ENCODE measurements at regions of chr16 and their contacts with region 1.

Region 1: GRCh38 chr16:56608043-56608875 is at the start of gene MT2A:
- DNase-seq: peak; percentile 96
- H3K4me3 ChIP-seq: peak within 1 kb of the TSS; percentile 50 to 93 (median 83)
- H3K27ac ChIP-seq: peak within 1 kb of the TSS; percentile 99
- H3K4me1 ChIP-seq: peaks cover 61% of the 10 kb centered on the region
- H3K27me3 ChIP-seq: no peaks in the 10 kb centered on the region
- CTCF ChIP-seq: no peak
- POLR2A ChIP-seq: peak; percentile 99
- total RNA-seq, gene MT2A: 1,337 and 1,517 TPM in 2 replicates

Region 2: DNA sequence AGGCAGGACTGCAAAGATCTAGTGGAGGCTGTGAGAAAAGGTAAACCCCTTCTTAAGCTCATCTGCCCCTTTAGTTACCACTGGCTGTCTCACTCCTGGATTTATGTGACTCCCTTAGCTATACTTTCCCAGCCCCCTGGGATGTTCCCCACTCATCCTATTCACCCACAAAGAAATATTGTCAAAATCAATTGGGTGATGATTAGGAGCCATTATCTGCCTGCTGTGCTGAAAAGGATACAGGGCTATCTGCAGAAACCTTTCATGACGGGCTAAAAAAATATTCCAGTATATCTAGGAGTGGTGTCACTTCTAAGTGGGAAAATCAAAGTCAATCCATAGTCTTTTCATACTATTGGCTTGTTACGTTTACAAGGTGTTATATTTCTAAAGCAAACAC is 425.0 kb before region 1 on chr16:
- CTCF ChIA-PET with region 1: no interaction called
- POLR2A ChIA-PET with region 1: no interaction called
- dilution Hi-C with region 1: no loop called
- intact Hi-C with region 1: no loop called
- DNase-seq: no peak
- H3K4me3 ChIP-seq: no peak overlapping the region
- H3K27ac ChIP-seq: no peak overlapping the region
- H3K4me1 ChIP-seq: no peaks in the 10 kb centered on the region
- H3K27me3 ChIP-seq: peaks cover 0 to 2% of the 10 kb centered on the region in 2 experiments
- CTCF ChIP-seq: no peak
- POLR2A ChIP-seq: no peak

Region 3: DNA sequence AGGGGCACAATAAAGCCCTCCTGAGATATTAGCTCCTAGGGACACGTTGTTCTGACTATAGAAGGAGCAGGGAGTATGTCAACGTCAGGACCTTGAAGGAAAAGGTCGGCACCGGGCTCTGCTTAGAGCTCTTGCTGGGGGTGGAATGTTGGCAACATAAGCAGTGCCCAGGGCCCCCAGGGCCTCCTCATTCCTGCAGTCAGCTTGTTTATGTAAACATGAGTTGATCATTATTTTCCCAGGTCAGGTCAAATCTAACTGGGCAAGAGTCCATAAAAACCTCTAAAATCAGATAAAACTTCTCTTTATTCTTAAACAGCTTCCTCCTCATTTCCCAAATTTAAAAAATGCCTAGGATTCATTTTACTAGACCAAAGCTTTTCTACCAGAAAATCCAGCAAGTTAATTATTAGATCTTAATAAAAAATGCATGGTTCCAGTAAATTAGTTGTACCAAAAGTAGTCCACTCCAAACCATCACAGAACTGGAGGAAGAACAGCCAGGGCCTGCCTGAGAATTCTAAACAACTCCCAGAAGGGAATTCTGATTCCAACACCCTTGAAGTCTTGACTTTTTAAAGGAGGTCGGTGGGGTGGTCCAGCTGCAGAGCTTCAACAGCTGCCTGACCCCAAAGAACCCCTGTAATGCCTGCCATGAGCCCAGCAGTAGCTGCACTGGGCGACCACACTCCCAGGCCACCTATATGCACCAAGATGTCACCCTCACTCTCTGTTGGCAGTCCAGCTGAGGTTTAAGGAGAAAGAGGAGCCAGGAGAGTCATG is 237.2 kb before region 1 on chr16:
- CTCF ChIA-PET with region 1: no interaction called
- POLR2A ChIA-PET with region 1: no interaction called
- dilution Hi-C with region 1: no loop called
- intact Hi-C with region 1: no loop called
- DNase-seq: peak; percentile 51
- H3K4me3 ChIP-seq: no peak overlapping the region
- H3K27ac ChIP-seq: no peak overlapping the region
- H3K4me1 ChIP-seq: peaks cover 16% of the 10 kb centered on the region
- H3K27me3 ChIP-seq: no peaks in the 10 kb centered on the region
- CTCF ChIP-seq: no peak
- POLR2A ChIP-seq: no peak

Region 4: DNA sequence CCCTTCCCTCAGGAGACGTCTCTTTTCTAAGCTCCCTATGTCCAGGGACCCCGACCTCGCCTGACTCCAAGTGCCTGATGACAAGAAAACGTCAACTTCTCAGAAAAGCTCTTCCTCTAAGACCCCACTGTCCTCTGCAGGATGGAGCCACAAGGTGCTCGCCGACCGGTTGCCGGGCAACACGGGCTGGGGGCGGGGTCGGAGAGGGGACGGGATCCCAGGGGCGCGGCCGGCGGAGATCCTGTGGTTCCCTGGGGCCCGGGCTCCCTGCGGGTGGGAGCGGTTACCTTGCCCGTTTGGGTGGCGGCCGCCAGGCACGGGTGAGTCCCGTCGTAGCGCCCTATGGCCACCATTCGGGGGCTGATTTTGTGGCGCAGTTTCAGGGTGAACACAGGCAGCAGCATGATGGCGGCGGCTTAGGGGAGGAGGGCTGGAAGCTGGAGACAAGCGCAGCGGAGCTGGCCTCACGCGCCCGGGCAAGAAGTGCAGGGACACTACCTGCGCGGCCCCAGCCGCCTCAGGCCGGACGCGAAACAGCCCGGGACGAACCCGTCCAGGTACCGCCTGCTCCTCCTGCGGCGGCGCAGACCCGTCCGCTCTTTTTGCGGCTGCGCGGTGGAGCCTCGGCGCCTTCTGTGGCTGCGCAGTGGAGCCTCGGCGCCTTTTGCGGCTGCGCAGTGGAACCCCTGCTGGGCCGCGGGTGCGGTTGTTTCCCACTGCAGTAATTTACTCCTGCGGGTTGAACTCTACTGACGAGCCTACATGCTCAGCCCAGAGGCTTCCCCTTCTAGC is 88.6 kb before region 1 on chr16 and contains the start of gene BBS2:
- CTCF ChIA-PET with region 1: interaction called, 113 read pairs
- POLR2A ChIA-PET with region 1: no interaction called
- dilution Hi-C with region 1: no loop called
- intact Hi-C with region 1: loop called (anchors 1 kb)
- DNase-seq: peak; percentile 89
- H3K4me3 ChIP-seq: peak within 1 kb of the TSS; percentile 61 to 89 (median 76)
- H3K27ac ChIP-seq: peak within 1 kb of the TSS; percentile 13
- H3K4me1 ChIP-seq: peaks cover 13% of the 10 kb centered on the region
- H3K27me3 ChIP-seq: no peaks in the 10 kb centered on the region
- CTCF ChIP-seq: no peak
- POLR2A ChIP-seq: peak; percentile 89
- total RNA-seq, gene BBS2: 33.3 and 44.8 TPM in 2 replicates

Region 5: GRCh38 chr16:56534847-56535383 is 73.3 kb before region 1 on chr16:
- CTCF ChIA-PET with region 1: no interaction called
- POLR2A ChIA-PET with region 1: no interaction called
- dilution Hi-C with region 1: no loop called
- intact Hi-C with region 1: no loop called
- DNase-seq: no peak
- H3K4me3 ChIP-seq: no peak overlapping the region
- H3K27ac ChIP-seq: no peak overlapping the region
- H3K4me1 ChIP-seq: peaks cover 9% of the 10 kb centered on the region
- H3K27me3 ChIP-seq: peaks cover 4 to 14% of the 10 kb centered on the region in 2 experiments
- CTCF ChIP-seq: no peak
- POLR2A ChIP-seq: no peak

Region 6: GRCh38 chr16:56576585-56577293 is 31.5 kb before region 1 on chr16:
- CTCF ChIA-PET with region 1: interaction called, 14 read pairs
- POLR2A ChIA-PET with region 1: no interaction called
- dilution Hi-C with region 1: no loop called
- intact Hi-C with region 1: loop called (anchors 1 kb)
- DNase-seq: peak; percentile 64
- H3K4me3 ChIP-seq: no peak overlapping the region
- H3K27ac ChIP-seq: no peak overlapping the region
- H3K4me1 ChIP-seq: no peaks in the 10 kb centered on the region
- H3K27me3 ChIP-seq: peaks cover 0 to 9% of the 10 kb centered on the region in 2 experiments
- CTCF ChIP-seq: peak; percentile 86 to 91
- POLR2A ChIP-seq: no peak

Region 7: DNA sequence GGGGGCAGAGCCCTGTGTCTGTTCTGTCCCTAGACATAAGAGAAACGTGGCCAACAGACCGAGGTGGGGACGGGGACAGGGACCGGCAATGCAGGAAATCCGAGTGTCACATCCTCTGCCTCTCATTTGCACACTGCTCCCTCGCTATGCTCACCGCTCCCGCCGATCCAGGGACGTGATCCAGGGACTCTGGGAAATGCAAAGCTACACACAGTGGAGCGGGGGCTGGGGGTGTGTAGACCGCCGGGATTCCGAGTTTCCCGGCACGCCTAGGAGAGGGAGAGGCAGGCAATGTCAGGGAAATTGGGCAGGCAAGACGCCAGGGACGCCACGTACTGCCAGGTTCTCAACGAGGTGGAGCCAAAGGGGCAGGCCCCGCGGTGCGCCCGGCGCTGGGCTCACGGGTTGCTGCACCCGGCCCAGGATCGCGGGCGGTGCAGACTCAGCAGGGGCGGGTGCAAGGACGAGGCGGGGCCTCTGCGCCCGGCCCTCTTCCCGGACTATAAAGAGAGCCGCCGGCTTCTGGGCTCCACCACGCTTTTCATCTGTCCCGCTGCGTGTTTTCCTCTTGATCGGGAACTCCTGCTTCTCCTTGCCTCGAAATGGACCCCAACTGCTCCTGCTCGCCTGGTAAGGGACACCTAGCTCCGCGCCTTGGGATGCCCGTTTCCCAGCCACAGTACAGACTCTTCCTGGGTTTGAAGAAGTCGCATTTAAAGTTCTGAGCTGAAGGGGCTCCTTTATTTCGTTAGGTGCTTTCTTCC is 73.9 kb after region 1 on chr16 and contains the start of gene MT1X:
- CTCF ChIA-PET with region 1: interaction called, 9 read pairs
- POLR2A ChIA-PET with region 1: no interaction called
- dilution Hi-C with region 1: no loop called
- intact Hi-C with region 1: loop called (anchors 1 kb)
- DNase-seq: peak; percentile 75
- H3K4me3 ChIP-seq: peak within 1 kb of the TSS; percentile 25 to 63 (median 37)
- H3K27ac ChIP-seq: peak within 1 kb of the TSS; percentile 19
- H3K4me1 ChIP-seq: peaks cover 10% of the 10 kb centered on the region
- H3K27me3 ChIP-seq: peaks cover 0 to 3% of the 10 kb centered on the region in 2 experiments
- CTCF ChIP-seq: no peak
- POLR2A ChIP-seq: peak; percentile 95
- total RNA-seq, gene MT1X: 15.6 and 19.2 TPM in 2 replicates

Region 8: GRCh38 chr16:57185944-57186871 is 577.9 kb after region 1 on chr16 and contains the starts of genes PSME3IP1 and RSPRY1:
- CTCF ChIA-PET with region 1: no interaction called
- POLR2A ChIA-PET with region 1: no interaction called
- dilution Hi-C with region 1: no loop called
- intact Hi-C with region 1: loop called (anchors 2 kb)
- DNase-seq: peak; percentile 100
- H3K4me3 ChIP-seq: peak within 1 kb of the TSS; percentile 88 to 95 (median 89)
- H3K27ac ChIP-seq: peak within 1 kb of the TSS; percentile 89
- H3K4me1 ChIP-seq: peaks cover 34% of the 10 kb centered on the region
- H3K27me3 ChIP-seq: no peaks in the 10 kb centered on the region
- CTCF ChIP-seq: no peak
- POLR2A ChIP-seq: peak; percentile 85
- total RNA-seq, gene PSME3IP1: 91.8 and 98.2 TPM in 2 replicates
- total RNA-seq, gene RSPRY1: 55.1 and 55.8 TPM in 2 replicates

Measured in endothelial cell of umbilical vein (primary cell).